Body of pancreas (tissue), 4 donors: ENCODE measurements at regions of chr11 and their contacts with region 1.

Region 1: GRCh38 chr11:47176328-47177228 is at the start of gene ARFGAP2:
- DNase-seq: peak; percentile 96 to 99 (median 98)
- ATAC-seq: peak; percentile 98
- H3K4me3 ChIP-seq: peak within 1 kb of the TSS; percentile 90 to 93
- H3K27ac ChIP-seq: peak within 1 kb of the TSS; percentile 98 to 100 (median 98)
- H3K4me1 ChIP-seq: peaks cover 48% of the 10 kb centered on the region
- H3K27me3 ChIP-seq: no peaks in the 10 kb centered on the region
- CTCF ChIP-seq: no peak
- POLR2A ChIP-seq: peak; percentile 42 to 53 (median 43)
- total RNA-seq, gene ARFGAP2: 143 to 212 TPM

Region 2: DNA sequence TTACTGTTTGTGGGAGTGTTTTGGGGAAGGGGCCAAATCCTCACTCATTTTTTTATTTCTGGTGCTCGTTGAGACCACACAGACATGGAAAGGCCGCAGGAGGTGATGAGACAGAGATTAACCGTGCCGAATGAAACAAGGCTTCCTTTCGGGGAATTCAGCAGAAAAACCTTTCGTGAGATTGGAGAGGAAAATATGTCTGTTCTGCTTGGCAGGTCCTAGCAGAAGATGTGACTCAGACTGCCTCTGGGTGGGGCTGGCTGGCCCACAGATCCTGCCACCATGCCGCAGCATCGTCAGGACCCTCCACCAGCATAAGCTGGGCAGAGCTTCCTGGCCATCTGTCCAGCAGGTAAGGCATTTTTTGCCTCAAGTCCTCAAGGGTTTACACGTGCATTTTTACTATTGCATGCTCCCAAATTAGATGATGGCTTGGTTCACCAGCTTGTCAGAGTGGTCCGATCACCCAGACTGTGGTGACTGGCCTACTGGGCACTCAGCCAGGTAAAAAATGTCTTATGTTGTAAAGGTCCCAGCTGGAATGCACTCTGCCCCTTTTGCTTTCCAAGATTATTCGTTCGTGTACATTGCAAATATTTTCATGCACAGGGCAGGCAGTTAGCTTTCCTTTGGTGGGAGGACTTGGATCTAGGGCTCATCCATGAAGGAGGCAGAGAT is 39.7 kb after region 1 on chr11:
- intact Hi-C with region 1: loop called (anchors 5 kb)
- DNase-seq: peak; percentile 41 to 63 (median 51)
- ATAC-seq: no peak
- H3K4me3 ChIP-seq: no peak overlapping the region
- H3K27ac ChIP-seq: peak overlapping the region in 3 of 4 donors; percentile 92 to 97 (median 97)
- H3K4me1 ChIP-seq: peaks cover 39% of the 10 kb centered on the region
- H3K27me3 ChIP-seq: no peaks in the 10 kb centered on the region
- CTCF ChIP-seq: no peak
- POLR2A ChIP-seq: no peak

Region 3: DNA sequence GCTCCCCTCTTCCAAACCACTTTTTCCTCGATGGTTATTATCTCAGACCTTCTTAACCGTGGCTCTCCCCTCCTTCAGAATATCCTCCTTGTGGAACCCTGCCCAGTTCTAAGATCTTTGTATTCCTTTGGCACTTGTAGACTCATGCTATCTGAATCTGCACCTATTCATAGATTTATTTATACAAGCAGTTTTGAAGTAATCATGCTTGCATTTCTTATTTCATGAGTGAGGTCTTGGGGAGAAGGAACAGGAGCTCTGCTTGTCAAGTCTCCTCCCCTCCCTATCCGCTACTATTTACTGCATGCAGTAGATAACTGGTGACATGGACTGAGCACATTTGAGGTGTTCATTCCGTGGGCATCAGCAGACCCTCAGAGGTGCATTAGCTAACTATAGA is 87.9 kb after region 1 on chr11:
- intact Hi-C with region 1: loop called (anchors 5 kb)
- DNase-seq: no peak
- ATAC-seq: no peak
- H3K4me3 ChIP-seq: no peak overlapping the region
- H3K27ac ChIP-seq: no peak overlapping the region
- H3K4me1 ChIP-seq: peaks cover 13% of the 10 kb centered on the region
- H3K27me3 ChIP-seq: no peaks in the 10 kb centered on the region
- CTCF ChIP-seq: no peak
- POLR2A ChIP-seq: no peak

Region 4: GRCh38 chr11:47285969-47286770 is 109.6 kb after region 1 on chr11:
- intact Hi-C with region 1: no loop called
- DNase-seq: no peak
- ATAC-seq: no peak
- H3K4me3 ChIP-seq: no peak overlapping the region
- H3K27ac ChIP-seq: no peak overlapping the region
- H3K4me1 ChIP-seq: no peaks in the 10 kb centered on the region
- H3K27me3 ChIP-seq: no peaks in the 10 kb centered on the region
- CTCF ChIP-seq: no peak
- POLR2A ChIP-seq: no peak